Sigmoid colon (tissue), 7 donors: ENCODE measurements at regions of chr2 and their contacts with region 1.

Region 1: DNA sequence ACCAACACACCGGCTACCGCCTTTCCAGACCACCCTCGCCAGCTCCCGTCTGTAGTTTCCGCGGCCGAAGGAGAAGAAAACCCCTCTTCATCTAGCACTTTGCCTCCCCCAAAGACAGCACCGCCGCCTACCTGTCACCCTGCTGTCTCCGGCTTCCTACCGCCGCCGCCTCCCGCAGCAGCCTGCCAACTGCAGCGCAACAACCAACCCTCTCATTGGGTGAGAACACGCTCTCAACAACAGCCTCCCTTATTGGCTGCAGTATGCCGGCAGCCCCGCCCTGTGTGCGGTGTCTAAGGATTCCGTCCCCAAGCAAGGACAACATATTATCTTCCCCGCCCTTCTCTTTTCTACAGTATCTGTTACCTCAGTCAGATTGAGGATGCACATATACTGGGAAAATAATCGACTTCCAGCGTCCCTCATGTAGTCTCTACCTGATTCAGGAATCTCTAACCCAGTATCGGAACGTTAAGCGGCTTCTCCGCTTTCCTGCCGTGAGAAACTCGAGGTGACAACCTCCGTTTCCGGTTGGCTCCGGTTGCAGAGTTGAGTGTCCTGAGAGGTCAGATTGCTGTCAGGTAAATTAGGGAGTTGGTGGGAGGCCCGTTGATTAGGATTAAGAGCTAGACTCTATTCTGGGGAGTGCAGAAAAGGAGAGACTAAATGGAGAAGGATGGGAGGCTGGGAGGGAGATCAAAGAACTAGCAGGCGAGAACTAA is at the starts of genes HYCC2 and NDUFB3:
- DNase-seq: peak; percentile 96
- H3K4me3 ChIP-seq: peak within 1 kb of the TSS; percentile 84 to 99 (median 93)
- H3K27ac ChIP-seq: peak within 1 kb of the TSS; percentile 87 to 90 (median 88)
- H3K4me1 ChIP-seq: peaks cover 0 to 61% (median 48%) of the 10 kb centered on the region in 4 donors
- H3K27me3 ChIP-seq: no peaks in the 10 kb centered on the region
- CTCF ChIP-seq: peak in 1 of 4 experiments; percentile 10
- EP300 ChIP-seq: no peak
- POLR2A ChIP-seq: peak; percentile 73 to 83
- total RNA-seq, gene HYCC2: 13.6 to 20.2 (median 18.7) TPM
- total RNA-seq, gene NDUFB3: 85.3 to 97.9 (median 89.8) TPM

Region 2: DNA sequence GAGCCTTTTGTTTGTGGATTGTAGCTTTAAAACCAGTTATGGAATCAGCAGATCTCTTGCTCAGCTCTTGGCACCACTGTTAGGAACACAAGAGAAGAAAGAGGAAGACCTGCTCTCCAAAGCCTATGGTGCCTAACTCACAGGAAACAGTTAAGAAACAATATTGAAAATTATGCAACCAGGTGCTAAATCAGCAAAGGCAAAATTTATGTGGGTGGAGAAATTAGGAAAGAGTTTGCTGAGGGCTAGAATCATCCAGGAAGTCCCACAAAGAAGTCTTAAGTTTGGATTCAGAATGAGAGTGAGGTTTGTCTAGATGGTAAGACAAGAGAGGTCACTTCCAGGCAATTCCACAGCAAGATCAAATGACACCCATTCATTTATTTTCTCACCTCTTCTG is 436.4 kb before region 1 on chr2:
- intact Hi-C with region 1: no loop called
- DNase-seq: no peak
- H3K4me3 ChIP-seq: no peak overlapping the region
- H3K27ac ChIP-seq: no peak overlapping the region
- H3K4me1 ChIP-seq: no peaks in the 10 kb centered on the region
- H3K27me3 ChIP-seq: no peaks in the 10 kb centered on the region
- CTCF ChIP-seq: no peak
- EP300 ChIP-seq: no peak
- POLR2A ChIP-seq: no peak

Region 3: DNA sequence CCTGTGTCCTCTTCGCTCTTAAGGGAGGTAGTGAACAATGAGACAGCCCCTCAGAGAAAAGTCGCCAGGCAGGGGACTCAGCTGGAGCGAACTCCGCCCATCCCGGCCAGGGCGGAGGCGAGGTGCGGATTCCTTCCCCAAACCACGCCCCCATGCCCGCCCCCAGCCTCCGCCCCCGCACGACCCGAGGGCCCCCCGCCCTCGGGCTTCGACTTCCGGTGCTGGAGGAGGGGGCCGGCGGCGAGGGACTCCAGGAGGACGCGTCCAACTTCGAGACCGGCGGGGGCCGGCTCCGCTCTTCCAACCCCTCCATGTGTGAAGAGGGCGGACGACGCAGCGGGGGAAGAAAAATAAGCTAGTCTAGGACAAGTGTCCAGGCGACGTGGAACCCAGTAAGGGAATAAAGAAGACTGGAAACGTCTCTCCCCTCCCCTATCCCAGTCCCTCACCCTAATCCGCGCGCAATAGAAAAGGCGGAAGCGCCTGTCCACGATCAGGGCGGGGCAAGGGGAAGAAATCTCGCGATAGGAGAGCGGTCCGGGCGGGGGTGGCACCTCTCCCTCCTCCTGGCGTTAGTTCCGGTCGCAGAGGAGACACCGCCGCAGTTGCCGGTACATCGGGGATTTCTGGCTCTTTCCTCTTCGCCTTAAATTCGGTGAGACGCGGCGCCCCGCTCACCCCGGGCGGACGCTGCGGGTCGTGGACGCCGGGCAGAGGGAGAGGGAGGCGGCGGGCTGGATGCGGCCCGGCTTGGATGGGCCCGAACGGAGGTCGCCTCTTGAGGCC is 260.1 kb before region 1 on chr2 and contains the start of gene BZW1:
- intact Hi-C with region 1: loop called (anchors 5 kb)
- DNase-seq: peak; percentile 99
- H3K4me3 ChIP-seq: peak within 1 kb of the TSS; percentile 76 to 99 (median 98)
- H3K27ac ChIP-seq: peak within 1 kb of the TSS; percentile 99 to 100 (median 100)
- H3K4me1 ChIP-seq: peaks cover 0 to 38% (median 35%) of the 10 kb centered on the region in 4 donors
- H3K27me3 ChIP-seq: no peaks in the 10 kb centered on the region
- CTCF ChIP-seq: no peak
- EP300 ChIP-seq: no peak
- POLR2A ChIP-seq: peak; percentile 94 to 96
- total RNA-seq, gene BZW1: 77.9 to 119 (median 100) TPM

Region 4: DNA sequence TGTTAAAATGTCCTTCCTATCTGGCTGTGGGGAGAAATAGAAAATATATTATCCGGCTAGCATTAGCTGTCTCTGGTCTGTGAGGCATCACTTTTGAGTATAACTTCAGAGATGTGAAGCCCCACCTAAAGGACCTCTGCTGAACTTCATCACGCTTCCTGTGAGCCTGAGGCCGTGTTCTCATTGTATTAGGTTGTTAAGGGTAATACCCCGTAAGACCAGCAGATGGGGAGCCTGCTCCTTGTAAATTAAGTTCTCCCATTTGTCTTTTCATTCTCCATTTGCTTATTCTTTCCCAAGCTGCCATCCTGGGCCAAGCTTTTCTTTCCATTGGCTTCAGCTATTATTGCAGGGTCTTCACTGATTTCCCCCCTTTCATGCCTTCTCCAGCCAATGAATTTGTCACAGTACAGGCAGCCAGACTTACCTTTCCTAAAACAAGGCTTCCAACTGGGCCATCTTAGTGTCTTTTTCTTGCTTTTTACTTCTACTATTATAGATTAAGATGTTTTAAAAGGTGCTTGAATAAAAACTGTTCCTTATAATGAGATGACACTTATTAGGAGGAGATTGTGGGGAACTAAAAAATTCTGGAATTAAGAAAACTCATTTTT is 170.1 kb before region 1 on chr2:
- intact Hi-C with region 1: loop called (anchors 5 kb)
- DNase-seq: peak; percentile 74
- H3K4me3 ChIP-seq: no peak overlapping the region
- H3K27ac ChIP-seq: no peak overlapping the region
- H3K4me1 ChIP-seq: no peaks in the 10 kb centered on the region
- H3K27me3 ChIP-seq: no peaks in the 10 kb centered on the region
- CTCF ChIP-seq: peak; percentile 39 to 73 (median 66)
- EP300 ChIP-seq: no peak
- POLR2A ChIP-seq: no peak

Region 5: GRCh38 chr2:201118121-201118960 is 46.7 kb after region 1 on chr2:
- intact Hi-C with region 1: loop called (anchors 2 kb)
- DNase-seq: peak; percentile 93
- H3K4me3 ChIP-seq: peak overlapping the region; percentile 80 to 91 (median 85)
- H3K27ac ChIP-seq: peak overlapping the region; percentile 98 to 99 (median 98)
- H3K4me1 ChIP-seq: peaks cover 0 to 50% (median 29%) of the 10 kb centered on the region in 4 donors
- H3K27me3 ChIP-seq: no peaks in the 10 kb centered on the region
- CTCF ChIP-seq: peak; percentile 30 to 54 (median 47)
- EP300 ChIP-seq: no peak
- POLR2A ChIP-seq: peak in 1 of 2 donors; percentile 44